ENCODE measurements at regions of chr6 and their contacts with region 1.

Region 1: GRCh38 chr6:38012573-38012972 is 193.0 kb downstream of the ZFAND3 start:
- DNase-seq: peak; percentile 30
- H3K4me3 ChIP-seq: no peak overlapping the region
- H3K27ac ChIP-seq: no peak overlapping the region
- H3K4me1 ChIP-seq: no peaks in the 10 kb centered on the region
- H3K27me3 ChIP-seq: no peaks in the 10 kb centered on the region
- CTCF ChIP-seq: peak; percentile 78 to 83

Region 2: GRCh38 chr6:37698261-37699137 is 314.1 kb before region 1 on chr6:
- CTCF ChIA-PET with region 1: no interaction called
- dilution Hi-C with region 1: no loop called
- in situ Hi-C with region 1: loop called in 1 of 2 experiments (anchors 10 kb)
- intact Hi-C with region 1: loop called (anchors 5 kb)
- DNase-seq: peak; percentile 46
- H3K4me3 ChIP-seq: peak overlapping the region; percentile 60 to 81 (median 66)
- H3K27ac ChIP-seq: no peak overlapping the region
- H3K4me1 ChIP-seq: peaks cover 23% of the 10 kb centered on the region
- H3K27me3 ChIP-seq: no peaks in the 10 kb centered on the region
- CTCF ChIP-seq: no peak

Region 3: GRCh38 chr6:37758234-37759002 is 254.2 kb before region 1 on chr6:
- CTCF ChIA-PET with region 1: no interaction called
- dilution Hi-C with region 1: loop called (anchors 5 kb)
- in situ Hi-C with region 1: no loop called
- intact Hi-C with region 1: no loop called
- DNase-seq: no peak
- H3K4me3 ChIP-seq: no peak overlapping the region
- H3K27ac ChIP-seq: no peak overlapping the region
- H3K4me1 ChIP-seq: peaks cover 3% of the 10 kb centered on the region
- H3K27me3 ChIP-seq: no peaks in the 10 kb centered on the region
- CTCF ChIP-seq: no peak

Measured in mammary epithelial cell (primary cell).